PC-9 (cell line): ENCODE measurements at regions of chr11 and their contacts with region 1.

Region 1: GRCh38 chr11:85875142-85875922 is 20.1 kb downstream of the CCDC83 start:
- DNase-seq: peak in 1 of 2 experiments; percentile 76
- H3K4me3 ChIP-seq: no peak overlapping the region
- H3K27ac ChIP-seq: peak overlapping the region; percentile 16; the same call in 1 of the 2 replicates
- H3K4me1 ChIP-seq: peaks cover 22% of the 10 kb centered on the region
- H3K27me3 ChIP-seq: no peaks in the 10 kb centered on the region
- CTCF ChIP-seq: no peak

Region 2: GRCh38 chr11:85517272-85517671 is 358.1 kb before region 1 on chr11:
- CTCF ChIA-PET with region 1: no interaction called
- POLR2A ChIA-PET with region 1: no interaction called
- intact Hi-C with region 1: no loop called
- DNase-seq: no peak
- H3K4me3 ChIP-seq: no peak overlapping the region
- H3K27ac ChIP-seq: no peak overlapping the region
- H3K4me1 ChIP-seq: no peaks in the 10 kb centered on the region
- H3K27me3 ChIP-seq: no peaks in the 10 kb centered on the region
- CTCF ChIP-seq: no peak

Region 3: DNA sequence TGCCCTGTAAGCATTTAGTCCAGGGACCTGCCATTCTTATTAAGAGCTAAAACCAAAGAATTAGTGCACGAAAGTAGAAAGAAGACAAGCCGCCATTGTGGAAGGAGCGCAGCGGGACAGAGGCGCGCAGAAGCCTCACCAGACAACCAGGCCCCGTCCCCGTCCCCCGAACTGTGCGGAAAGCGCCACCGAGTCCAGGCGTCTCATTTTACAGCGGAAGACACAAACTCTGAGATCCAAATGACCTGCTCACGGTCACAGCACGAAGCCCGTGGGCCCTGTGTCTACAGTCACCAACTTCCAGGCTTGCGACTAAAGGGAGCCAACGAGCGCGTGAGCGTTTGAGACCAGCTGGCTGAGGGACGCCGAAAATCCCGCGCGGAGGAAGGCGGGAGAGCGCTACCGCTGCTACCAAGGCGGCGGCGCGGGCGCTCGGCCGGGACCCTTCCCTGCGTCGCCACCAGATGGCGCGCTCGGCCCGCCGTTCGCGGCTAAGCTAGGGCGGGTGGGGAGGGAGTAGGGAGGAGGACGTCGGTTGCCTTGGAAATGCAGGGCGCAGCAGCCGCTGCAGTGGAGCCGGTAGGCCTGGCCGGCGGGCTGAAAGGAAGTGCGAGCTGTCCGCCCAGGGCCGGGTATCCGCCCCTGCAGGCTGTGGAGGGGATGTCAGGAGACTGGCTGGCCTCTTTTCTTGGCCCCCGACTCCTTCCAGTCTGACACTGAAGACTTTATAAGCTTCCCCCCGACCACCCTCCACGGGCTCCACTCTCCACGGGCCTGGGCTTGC is 20.6 kb before region 1 on chr11:
- CTCF ChIA-PET with region 1: no interaction called
- POLR2A ChIA-PET with region 1: no interaction called
- intact Hi-C with region 1: no loop called
- DNase-seq: peak; percentile 86 to 94
- H3K4me3 ChIP-seq: peak overlapping the region; percentile 65
- H3K27ac ChIP-seq: peak overlapping the region; percentile 48
- H3K4me1 ChIP-seq: peaks cover 8% of the 10 kb centered on the region
- H3K27me3 ChIP-seq: no peaks in the 10 kb centered on the region
- CTCF ChIP-seq: peak; percentile 91

Region 4: GRCh38 chr11:86395061-86395551 is 519.8 kb after region 1 on chr11:
- CTCF ChIA-PET with region 1: no interaction called
- POLR2A ChIA-PET with region 1: interaction called, 10 read pairs
- intact Hi-C with region 1: no loop called
- DNase-seq: no peak
- H3K4me3 ChIP-seq: no peak overlapping the region
- H3K27ac ChIP-seq: no peak overlapping the region
- H3K4me1 ChIP-seq: no peaks in the 10 kb centered on the region
- H3K27me3 ChIP-seq: no peaks in the 10 kb centered on the region
- CTCF ChIP-seq: no peak